Activated CD4-positive, alpha-beta memory T cell treated with anti-CD3 and anti-CD28 coated beads for 36 hours (primary cell): ENCODE measurements at regions of chr14 and their contacts with region 1.

Region 1: GRCh38 chr14:59275653-59276052 is 87.2 kb downstream of the DAAM1 start:
- DNase-seq: no peak
- H3K4me3 Mint-ChIP-seq: no peak overlapping the region
- H3K27ac Mint-ChIP-seq: no peak overlapping the region
- H3K4me1 Mint-ChIP-seq: peaks cover 22% of the 10 kb centered on the region
- H3K27me3 Mint-ChIP-seq: no peaks in the 10 kb centered on the region

Region 2: DNA sequence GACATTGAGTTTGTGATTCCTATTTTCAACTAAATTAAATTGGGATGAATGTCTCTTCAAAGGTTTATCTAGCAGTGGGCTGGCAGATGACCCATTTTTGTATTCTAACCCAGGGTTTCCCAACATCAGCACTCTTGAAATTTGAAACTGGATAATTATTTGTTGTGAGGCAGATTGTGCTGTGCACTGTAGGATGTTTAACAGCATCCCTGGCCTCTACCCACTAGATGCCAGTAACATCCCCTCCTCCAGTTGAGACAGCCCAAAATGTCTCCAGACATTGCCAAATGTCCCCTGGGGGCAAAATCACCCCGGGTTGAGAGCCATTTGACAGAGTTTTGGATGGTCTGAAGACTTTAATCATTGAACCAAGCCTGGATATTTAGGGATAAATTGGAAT is 76.0 kb before region 1 on chr14:
- CTCF ChIA-PET with region 1: no interaction called
- POLR2A ChIA-PET with region 1: no interaction called
- intact Hi-C with region 1: no loop called
- DNase-seq: no peak
- H3K4me3 Mint-ChIP-seq: no peak overlapping the region
- H3K27ac Mint-ChIP-seq: no peak overlapping the region
- H3K4me1 Mint-ChIP-seq: peaks cover 4% of the 10 kb centered on the region
- H3K27me3 Mint-ChIP-seq: no peaks in the 10 kb centered on the region

Region 3: DNA sequence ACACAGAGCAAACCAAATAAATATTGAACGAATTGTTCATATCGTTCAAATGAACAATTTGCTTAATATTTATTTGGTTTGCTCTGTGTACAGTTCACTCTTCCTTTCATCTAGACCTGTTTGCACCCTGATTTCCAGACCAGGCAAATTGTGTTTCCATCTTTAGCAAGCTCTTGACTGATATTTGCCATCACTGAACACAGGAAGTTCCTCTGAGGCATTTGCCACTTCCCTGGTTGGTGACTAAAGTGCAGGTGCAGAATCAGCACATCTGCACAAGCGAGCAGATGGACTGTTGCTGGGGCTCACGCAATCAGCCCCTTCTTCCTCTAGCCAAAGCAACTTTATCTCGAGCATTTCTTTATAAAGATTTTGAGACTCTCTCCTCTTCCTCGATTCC is 25.7 kb after region 1 on chr14:
- CTCF ChIA-PET with region 1: no interaction called
- POLR2A ChIA-PET with region 1: no interaction called
- intact Hi-C with region 1: loop called (anchors 2 kb)
- DNase-seq: peak; percentile 47
- H3K4me3 Mint-ChIP-seq: no peak overlapping the region
- H3K27ac Mint-ChIP-seq: no peak overlapping the region
- H3K4me1 Mint-ChIP-seq: peaks cover 20% of the 10 kb centered on the region
- H3K27me3 Mint-ChIP-seq: no peaks in the 10 kb centered on the region